CD4-positive, alpha-beta memory T cell (primary cell): ENCODE measurements at regions of chr6 and their contacts with region 1.

Region 1: GRCh38 chr6:30541515-30542403 is 14.5 kb downstream of the GNL1 start:
- DNase-seq: peak; percentile 81 to 83 (median 82)
- H3K4me3 ChIP-seq: peak overlapping the region; percentile 39 to 60
- H3K4me3 Mint-ChIP-seq: peak overlapping the region; percentile 84 to 94 (median 90)
- H3K27ac ChIP-seq: peak overlapping the region; percentile 46
- H3K27ac Mint-ChIP-seq: peak overlapping the region; percentile 79 to 99 (median 95)
- H3K4me1 ChIP-seq: peaks cover 37% of the 10 kb centered on the region
- H3K4me1 Mint-ChIP-seq: peaks cover 31 to 44% (median 31%) of the 10 kb centered on the region in 4 donors
- H3K27me3 ChIP-seq: no peaks in the 10 kb centered on the region
- H3K27me3 Mint-ChIP-seq: no peaks in the 10 kb centered on the region

Region 2: DNA sequence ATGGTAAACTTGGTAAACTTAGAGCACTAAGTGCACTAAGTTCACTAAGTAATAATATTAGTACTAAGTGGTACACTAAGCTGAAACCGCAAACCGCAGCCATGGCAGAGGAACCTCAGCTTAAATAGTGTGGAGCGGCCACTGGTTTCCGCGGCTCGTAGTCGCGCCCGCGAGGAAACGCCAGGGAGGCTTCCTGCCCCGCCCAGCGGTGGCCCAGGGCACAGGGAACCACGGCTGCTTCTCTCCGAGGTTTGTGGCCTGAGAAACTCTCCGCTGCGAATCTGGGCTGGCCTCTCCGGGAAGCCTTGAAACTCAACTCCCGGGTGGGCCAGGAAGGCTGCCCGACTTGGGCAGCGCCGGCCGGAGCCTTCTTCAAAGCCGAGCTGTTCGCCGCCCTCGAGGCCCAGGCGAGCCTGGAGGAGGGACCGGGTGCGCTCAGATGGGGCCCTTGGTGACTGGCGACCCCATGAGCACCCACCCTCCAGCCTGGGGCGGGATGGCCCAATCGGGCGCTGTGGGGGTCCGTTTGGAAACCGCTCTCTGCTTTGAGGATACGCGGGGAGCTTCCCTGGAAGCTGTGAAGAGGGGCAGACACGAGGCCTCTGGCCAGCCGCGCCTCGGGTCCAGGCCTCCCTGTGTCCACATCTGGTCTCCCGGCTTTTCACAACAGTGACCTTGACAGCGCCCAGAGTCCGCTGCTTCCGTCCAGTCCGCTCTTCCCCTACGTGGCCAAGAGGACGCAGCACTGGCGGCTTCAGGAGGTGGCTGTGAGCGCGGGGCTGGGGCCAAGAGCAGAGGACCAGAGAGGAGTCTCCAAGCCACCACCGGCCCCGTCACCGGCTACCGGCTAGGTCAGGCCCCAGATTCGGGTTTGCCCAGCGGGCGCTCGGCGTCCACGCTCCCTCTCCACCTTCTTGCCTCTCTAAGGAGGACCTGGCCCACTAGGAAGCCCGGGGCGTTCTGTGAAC is 77.8 kb before region 1 on chr6:
- CTCF ChIA-PET with region 1: interaction called, 15 read pairs
- POLR2A ChIA-PET with region 1: interaction called, 11 read pairs
- intact Hi-C with region 1: no loop called
- DNase-seq: peak; percentile 64 to 83 (median 70)
- H3K4me3 ChIP-seq: no peak overlapping the region
- H3K4me3 Mint-ChIP-seq: peak overlapping the region; percentile 11 to 80 (median 64)
- H3K27ac ChIP-seq: no peak overlapping the region
- H3K27ac Mint-ChIP-seq: peak overlapping the region in 1 of 7 donors; percentile 66
- H3K4me1 ChIP-seq: peaks cover 52% of the 10 kb centered on the region
- H3K4me1 Mint-ChIP-seq: peaks cover 25 to 61% (median 45%) of the 10 kb centered on the region in 4 donors
- H3K27me3 ChIP-seq: peaks cover 76% of the 10 kb centered on the region
- H3K27me3 Mint-ChIP-seq: peaks cover 70 to 72% of the 10 kb centered on the region in 2 donors

Region 3: DNA sequence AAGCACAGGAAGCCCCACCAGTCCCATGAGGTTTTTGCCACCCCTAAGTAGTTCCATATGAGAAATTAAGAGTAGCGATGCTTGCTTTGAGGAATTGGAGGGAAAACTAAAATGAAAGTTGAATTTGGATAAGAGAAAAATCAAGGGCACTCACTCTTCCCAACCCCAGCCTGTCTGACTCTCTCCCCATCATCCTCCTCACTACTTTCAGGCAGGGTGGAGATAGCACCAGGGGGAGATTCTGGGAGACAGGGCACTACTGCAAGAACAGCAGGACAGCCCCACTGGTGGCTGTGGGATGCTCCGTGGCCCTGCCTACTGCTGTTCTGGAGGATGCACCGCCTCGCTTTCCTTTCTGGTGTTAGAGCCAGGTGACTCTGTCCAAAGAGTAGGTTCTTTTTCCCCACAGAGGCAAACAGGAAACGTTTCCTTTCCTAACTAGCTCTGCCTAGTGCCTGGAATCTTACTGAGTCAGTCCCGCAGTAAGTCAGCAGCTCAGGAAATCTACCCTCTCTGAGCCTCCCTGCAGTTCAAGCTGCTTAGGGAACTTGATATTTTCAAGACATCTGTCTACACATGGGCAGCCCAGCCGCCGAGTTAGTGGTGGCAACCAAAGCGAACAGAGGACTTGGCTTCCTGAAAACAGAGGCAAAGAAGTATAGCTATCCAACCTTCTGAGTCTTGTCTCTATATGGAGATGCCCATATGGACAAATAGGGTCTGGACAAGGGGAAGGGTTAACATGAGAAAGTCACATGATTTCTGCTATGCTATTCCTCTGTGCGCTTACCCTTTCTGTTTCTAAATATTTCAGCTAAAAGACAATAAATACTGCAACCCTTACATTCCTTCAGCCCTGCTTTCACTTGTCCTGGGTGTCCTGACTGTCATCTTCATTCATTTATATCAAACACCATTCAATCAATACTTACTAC is 41.1 kb before region 1 on chr6:
- CTCF ChIA-PET with region 1: interaction called, 100 read pairs
- POLR2A ChIA-PET with region 1: interaction called, 255 read pairs
- intact Hi-C with region 1: no loop called
- DNase-seq: no peak
- H3K4me3 ChIP-seq: peak overlapping the region in 1 of 2 donors; percentile 6
- H3K4me3 Mint-ChIP-seq: peak overlapping the region; percentile 70 to 85 (median 80)
- H3K27ac ChIP-seq: no peak overlapping the region
- H3K27ac Mint-ChIP-seq: peak overlapping the region; percentile 25 to 89 (median 73)
- H3K4me1 ChIP-seq: peaks cover 34% of the 10 kb centered on the region
- H3K4me1 Mint-ChIP-seq: peaks cover 24 to 42% (median 32%) of the 10 kb centered on the region in 4 donors
- H3K27me3 ChIP-seq: no peaks in the 10 kb centered on the region
- H3K27me3 Mint-ChIP-seq: no peaks in the 10 kb centered on the region

Region 4: DNA sequence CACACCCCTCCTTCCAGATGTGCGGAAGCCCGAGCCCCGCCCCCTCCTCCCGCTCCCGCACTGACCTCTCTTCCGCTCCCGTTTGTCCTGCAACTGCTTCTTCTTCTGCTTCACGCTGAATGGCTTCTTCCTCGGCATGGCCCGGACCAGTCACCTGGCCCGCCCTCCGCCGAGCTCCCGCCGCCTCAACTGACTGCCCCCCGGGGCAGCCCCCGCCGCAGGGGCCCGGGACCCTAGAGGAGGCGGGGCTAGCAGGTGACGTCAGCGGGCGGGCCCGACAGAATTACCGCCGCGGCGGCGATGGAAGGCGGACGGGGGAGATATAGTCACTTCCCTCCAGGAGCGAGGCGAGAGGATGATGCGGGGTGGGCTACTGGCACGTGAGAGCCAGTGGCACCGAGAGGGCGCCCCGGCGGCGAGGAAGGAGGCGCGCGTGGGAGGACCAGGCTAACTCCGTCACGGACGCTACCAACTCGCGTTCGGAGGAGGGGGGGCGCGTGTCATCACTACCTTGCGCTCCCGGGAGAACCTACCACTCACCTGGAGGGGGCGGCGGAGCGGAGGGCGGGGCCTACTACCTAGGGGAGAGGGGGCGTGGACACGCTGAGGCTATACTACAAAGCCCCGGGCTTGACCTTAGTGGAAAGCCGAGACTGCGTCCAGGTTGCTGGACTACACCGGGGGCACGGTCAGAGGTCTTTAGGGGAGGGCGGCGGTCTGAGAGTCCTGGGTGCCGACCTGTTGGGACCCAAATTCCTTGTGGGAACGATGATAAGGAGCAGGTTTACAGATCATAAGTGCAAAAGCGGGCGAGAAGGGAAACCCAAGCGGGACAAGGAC is 14.5 kb after region 1 on chr6 and contains the start of gene GNL1:
- CTCF ChIA-PET with region 1: interaction called, 83 read pairs
- POLR2A ChIA-PET with region 1: interaction called, 133 read pairs
- intact Hi-C with region 1: loop called (anchors 1 kb)
- DNase-seq: peak; percentile 98 to 99 (median 99)
- H3K4me3 ChIP-seq: peak within 1 kb of the TSS; percentile 79 to 99
- H3K4me3 Mint-ChIP-seq: peak within 1 kb of the TSS; percentile 97 to 100 (median 99)
- H3K27ac ChIP-seq: peak within 1 kb of the TSS; percentile 96
- H3K27ac Mint-ChIP-seq: peak within 1 kb of the TSS; percentile 97 to 100 (median 100)
- H3K4me1 ChIP-seq: peaks cover 30% of the 10 kb centered on the region
- H3K4me1 Mint-ChIP-seq: peaks cover 26 to 65% (median 38%) of the 10 kb centered on the region in 4 donors
- H3K27me3 ChIP-seq: no peaks in the 10 kb centered on the region
- H3K27me3 Mint-ChIP-seq: peaks cover 0 to 1% of the 10 kb centered on the region in 2 donors
- total RNA-seq, gene GNL1: 83.4 to 83.9 TPM

Region 5: GRCh38 chr6:30578051-30578450 is 36.3 kb after region 1 on chr6:
- CTCF ChIA-PET with region 1: interaction called, 10 read pairs
- POLR2A ChIA-PET with region 1: no interaction called
- intact Hi-C with region 1: no loop called
- DNase-seq: no peak
- H3K4me3 ChIP-seq: no peak overlapping the region
- H3K4me3 Mint-ChIP-seq: no peak overlapping the region
- H3K27ac ChIP-seq: no peak overlapping the region
- H3K27ac Mint-ChIP-seq: peak overlapping the region in 3 of 7 donors; percentile 32 to 70 (median 54)
- H3K4me1 ChIP-seq: peaks cover 18% of the 10 kb centered on the region
- H3K4me1 Mint-ChIP-seq: peaks cover 26 to 30% (median 27%) of the 10 kb centered on the region in 4 donors
- H3K27me3 ChIP-seq: no peaks in the 10 kb centered on the region
- H3K27me3 Mint-ChIP-seq: no peaks in the 10 kb centered on the region

Region 6: DNA sequence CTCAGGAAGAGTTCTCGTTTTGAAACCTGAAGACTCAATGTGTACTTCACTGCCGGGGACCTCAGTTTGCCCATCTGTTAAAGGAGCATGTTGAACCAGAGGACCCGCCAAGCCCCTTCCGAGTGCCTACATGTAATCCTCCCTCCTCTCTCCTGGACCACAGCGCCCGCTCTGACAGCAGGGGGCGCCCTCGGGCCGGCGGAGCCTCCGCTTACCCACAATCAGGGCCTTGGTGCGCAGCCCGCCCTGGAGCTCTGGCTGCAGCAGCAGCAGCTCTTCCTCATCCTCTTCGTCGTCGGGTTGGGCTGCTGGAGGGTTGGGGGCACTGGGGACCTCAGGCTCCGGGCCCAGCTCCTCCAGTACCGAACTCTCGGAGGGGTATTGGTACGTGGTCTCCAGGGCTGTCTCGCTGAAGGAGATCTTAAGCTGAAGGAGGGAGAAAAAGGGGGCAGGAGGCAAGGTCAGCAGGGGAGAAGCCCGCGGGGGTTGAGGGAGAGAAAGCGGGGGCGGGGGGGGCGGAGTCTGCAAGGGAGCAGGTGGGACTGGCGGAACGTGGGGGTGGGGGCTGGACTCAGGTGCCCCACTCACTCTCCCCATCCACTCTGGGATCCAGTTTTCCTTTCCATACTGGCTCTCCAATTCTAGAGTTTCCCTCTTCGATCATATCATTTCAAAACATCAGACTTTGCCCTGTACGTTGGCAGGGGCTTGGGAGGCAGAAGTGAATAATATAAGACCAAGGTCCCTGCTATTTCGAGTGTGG is 137.4 kb after region 1 on chr6:
- CTCF ChIA-PET with region 1: interaction called, 13 read pairs
- POLR2A ChIA-PET with region 1: interaction called, 7 read pairs
- intact Hi-C with region 1: no loop called
- DNase-seq: peak; percentile 87 to 92 (median 89)
- H3K4me3 ChIP-seq: peak overlapping the region; percentile 70 to 93
- H3K4me3 Mint-ChIP-seq: peak overlapping the region; percentile 97 to 100 (median 99)
- H3K27ac ChIP-seq: peak overlapping the region; percentile 94
- H3K27ac Mint-ChIP-seq: peak overlapping the region; percentile 88 to 99 (median 91)
- H3K4me1 ChIP-seq: peaks cover 38% of the 10 kb centered on the region
- H3K4me1 Mint-ChIP-seq: peaks cover 17 to 57% (median 34%) of the 10 kb centered on the region in 4 donors
- H3K27me3 ChIP-seq: no peaks in the 10 kb centered on the region
- H3K27me3 Mint-ChIP-seq: no peaks in the 10 kb centered on the region

Region 7: GRCh38 chr6:30877419-30878371 is 335.9 kb after region 1 on chr6:
- CTCF ChIA-PET with region 1: interaction called, 6 read pairs
- POLR2A ChIA-PET with region 1: no interaction called
- intact Hi-C with region 1: loop called (anchors 5 kb)
- DNase-seq: peak; percentile 62 to 71 (median 68)
- H3K4me3 ChIP-seq: peak overlapping the region; percentile 40 to 43
- H3K4me3 Mint-ChIP-seq: peak overlapping the region; percentile 61 to 91 (median 82)
- H3K27ac ChIP-seq: no peak overlapping the region
- H3K27ac Mint-ChIP-seq: peak overlapping the region in 6 of 7 donors; percentile 21 to 91 (median 72)
- H3K4me1 ChIP-seq: peaks cover 10% of the 10 kb centered on the region
- H3K4me1 Mint-ChIP-seq: peaks cover 7 to 27% (median 11%) of the 10 kb centered on the region in 4 donors
- H3K27me3 ChIP-seq: no peaks in the 10 kb centered on the region
- H3K27me3 Mint-ChIP-seq: no peaks in the 10 kb centered on the region